ENCODE measurements at regions of chr12 and their contacts with region 1.

Region 1: GRCh38 chr12:84874125-84874824 is 38.3 kb downstream of the SLC6A15 start:
- DNase-seq: no peak
- H3K4me3 ChIP-seq: no peak overlapping the region
- H3K27ac ChIP-seq: no peak overlapping the region
- H3K4me1 ChIP-seq: no peaks in the 10 kb centered on the region
- H3K27me3 ChIP-seq: no peaks in the 10 kb centered on the region
- CTCF ChIP-seq: peak in 2 of 3 experiments; percentile 56 to 66; a peak in 2 of 4 replicates
- EP300 ChIP-seq: no peak
- POLR2A ChIP-seq: no peak
- RAD21 ChIP-seq: peak; percentile 87 to 89

Region 2: GRCh38 chr12:84862186-84862585 is 12.1 kb before region 1 on chr12:
- CTCF ChIA-PET with region 1: interaction called, 17 read pairs
- POLR2A ChIA-PET with region 1: no interaction called
- DNase-seq: no peak
- H3K4me3 ChIP-seq: no peak overlapping the region
- H3K27ac ChIP-seq: no peak overlapping the region
- H3K4me1 ChIP-seq: no peaks in the 10 kb centered on the region
- H3K27me3 ChIP-seq: no peaks in the 10 kb centered on the region
- CTCF ChIP-seq: no peak
- EP300 ChIP-seq: no peak
- POLR2A ChIP-seq: no peak
- RAD21 ChIP-seq: no peak

Region 3: DNA sequence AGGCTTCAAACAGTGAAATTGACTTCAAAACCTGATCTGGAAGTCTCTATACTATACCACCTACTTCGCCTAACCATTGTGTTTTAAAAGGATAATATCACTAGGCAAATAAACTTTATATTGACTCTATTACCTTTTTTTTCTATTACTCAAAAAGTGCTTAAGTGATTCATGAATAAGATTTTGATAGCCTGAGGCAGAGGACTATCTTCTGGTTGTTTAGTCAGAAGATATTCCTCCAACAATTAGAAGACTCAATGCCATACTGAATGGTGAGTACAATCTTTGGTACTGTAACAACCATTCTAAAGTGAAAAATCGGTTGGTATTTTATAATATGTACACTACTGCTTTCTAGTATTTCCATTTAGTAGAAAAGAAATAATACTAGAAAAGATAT is 15.5 kb after region 1 on chr12:
- CTCF ChIA-PET with region 1: interaction called, 10 read pairs
- POLR2A ChIA-PET with region 1: no interaction called
- DNase-seq: no peak
- H3K4me3 ChIP-seq: no peak overlapping the region
- H3K27ac ChIP-seq: no peak overlapping the region
- H3K4me1 ChIP-seq: no peaks in the 10 kb centered on the region
- H3K27me3 ChIP-seq: no peaks in the 10 kb centered on the region
- CTCF ChIP-seq: no peak
- EP300 ChIP-seq: no peak
- POLR2A ChIP-seq: no peak
- RAD21 ChIP-seq: no peak

Region 4: GRCh38 chr12:84912198-84913128 is 38.2 kb after region 1 on chr12 and contains the start of gene SLC6A15:
- CTCF ChIA-PET with region 1: interaction called, 11 read pairs
- POLR2A ChIA-PET with region 1: interaction called, 3 read pairs
- DNase-seq: peak in 1 of 2 experiments; percentile 88
- H3K4me3 ChIP-seq: peak within 1 kb of the TSS; percentile 69 to 93 (median 86)
- H3K27ac ChIP-seq: no peak within 1 kb of the TSS; the same call in 1 of the 2 replicates
- H3K4me1 ChIP-seq: peaks cover 0 to 6% (median 0%) of the 10 kb centered on the region in 4 experiments; a peak in 1 of 7 replicates
- H3K27me3 ChIP-seq: no peaks in the 10 kb centered on the region
- CTCF ChIP-seq: peak; percentile 44 to 73 (median 64)
- EP300 ChIP-seq: no peak
- POLR2A ChIP-seq: peak in 1 of 2 experiments; percentile 73; a peak in 1 of 3 replicates
- RAD21 ChIP-seq: peak in 1 of 2 experiments; percentile 43; a peak in 2 of 4 replicates
- total RNA-seq, gene SLC6A15: 38.1 and 42.0 TPM in 2 replicates

Region 5: DNA sequence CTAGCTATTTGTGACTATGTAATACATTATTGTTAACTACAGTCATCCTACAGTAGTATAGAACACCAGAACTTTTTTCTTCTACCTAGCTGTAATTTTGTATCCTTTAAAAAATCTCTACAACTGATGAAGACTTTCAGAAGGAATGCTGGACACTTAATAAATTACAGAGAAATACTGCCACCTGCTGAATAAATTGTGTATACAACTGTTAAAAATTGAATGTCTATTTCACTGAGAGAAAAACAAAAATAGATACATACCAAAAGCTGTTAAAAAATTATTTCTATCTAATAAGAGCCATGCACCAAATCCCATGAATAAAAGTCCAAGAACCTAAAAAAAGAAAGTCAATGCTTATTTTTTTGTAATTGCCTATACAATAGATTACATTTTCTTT is 155.2 kb after region 1 on chr12:
- CTCF ChIA-PET with region 1: interaction called, 150 read pairs
- POLR2A ChIA-PET with region 1: interaction called, 3 read pairs
- DNase-seq: no peak
- H3K4me3 ChIP-seq: no peak overlapping the region
- H3K27ac ChIP-seq: no peak overlapping the region
- H3K4me1 ChIP-seq: no peaks in the 10 kb centered on the region
- H3K27me3 ChIP-seq: peaks cover 0 to 2% (median 0%) of the 10 kb centered on the region in 4 experiments; a peak in 1 of 7 replicates
- CTCF ChIP-seq: peak in 1 of 3 experiments; percentile 24; a peak in 1 of 4 replicates
- EP300 ChIP-seq: no peak
- POLR2A ChIP-seq: no peak
- RAD21 ChIP-seq: peak in 1 of 2 experiments; percentile 62; a peak in 3 of 4 replicates

Region 6: DNA sequence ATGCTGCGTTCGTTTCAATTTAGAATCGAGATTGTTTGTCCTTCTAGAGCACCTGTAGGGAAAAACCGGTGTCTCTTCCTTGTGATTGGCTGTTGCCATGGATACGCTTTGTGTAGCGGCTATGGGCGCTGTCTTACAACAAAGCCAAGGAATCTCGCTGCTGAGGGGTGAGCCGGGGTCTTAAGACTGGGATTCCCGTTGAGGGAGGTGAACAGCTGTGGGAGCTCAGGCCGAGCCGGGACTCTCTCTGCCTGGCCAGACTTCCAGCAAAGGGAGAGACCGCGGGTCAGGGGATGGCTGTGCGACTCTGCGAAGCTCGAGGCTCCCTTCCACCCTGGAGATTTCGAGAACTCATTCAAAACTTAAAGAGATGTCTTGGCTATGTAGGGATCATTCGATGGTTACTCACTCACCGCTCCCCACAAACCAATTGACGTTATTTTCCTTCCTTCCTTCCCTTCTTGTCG is 162.0 kb after region 1 on chr12 and contains the starts of genes LRRIQ1 and TSPAN19:
- CTCF ChIA-PET with region 1: interaction called, 150 read pairs
- POLR2A ChIA-PET with region 1: interaction called, 3 read pairs
- DNase-seq: peak; percentile 70 to 86
- H3K4me3 ChIP-seq: peak within 1 kb of the TSS; percentile 64 to 87 (median 83)
- H3K27ac ChIP-seq: peak within 1 kb of the TSS; percentile 78
- H3K4me1 ChIP-seq: no peaks in the 10 kb centered on the region
- H3K27me3 ChIP-seq: peaks cover 0 to 2% (median 0%) of the 10 kb centered on the region in 4 experiments; a peak in 1 of 7 replicates
- CTCF ChIP-seq: no peak
- EP300 ChIP-seq: no peak
- POLR2A ChIP-seq: peak in 1 of 2 experiments; percentile 68; a peak in 1 of 3 replicates
- RAD21 ChIP-seq: no peak
- total RNA-seq, gene LRRIQ1: 0.76 and 1.2 TPM in 2 replicates
- total RNA-seq, gene TSPAN19: not detected in 2 replicates

Region 7: GRCh38 chr12:85057370-85057963 is 183.2 kb after region 1 on chr12:
- CTCF ChIA-PET with region 1: interaction called, 61 read pairs
- POLR2A ChIA-PET with region 1: no interaction called
- DNase-seq: peak in 1 of 2 experiments; percentile 60
- H3K4me3 ChIP-seq: no peak overlapping the region
- H3K27ac ChIP-seq: no peak overlapping the region
- H3K4me1 ChIP-seq: no peaks in the 10 kb centered on the region
- H3K27me3 ChIP-seq: no peaks in the 10 kb centered on the region
- CTCF ChIP-seq: peak in 2 of 3 experiments; percentile 54 to 58; a peak in 3 of 4 replicates
- EP300 ChIP-seq: no peak
- POLR2A ChIP-seq: no peak
- RAD21 ChIP-seq: peak; percentile 77

Measured in H1 (cell line).